Activated naive CD4-positive, alpha-beta T cell treated with anti-CD3 and anti-CD28 coated beads, Interleukin-2, amount 10 ng/mL, durations not matched to agents 7 days and 5 days (primary cell): ENCODE measurements at regions of chr5 and their contacts with region 1.

Region 1: DNA sequence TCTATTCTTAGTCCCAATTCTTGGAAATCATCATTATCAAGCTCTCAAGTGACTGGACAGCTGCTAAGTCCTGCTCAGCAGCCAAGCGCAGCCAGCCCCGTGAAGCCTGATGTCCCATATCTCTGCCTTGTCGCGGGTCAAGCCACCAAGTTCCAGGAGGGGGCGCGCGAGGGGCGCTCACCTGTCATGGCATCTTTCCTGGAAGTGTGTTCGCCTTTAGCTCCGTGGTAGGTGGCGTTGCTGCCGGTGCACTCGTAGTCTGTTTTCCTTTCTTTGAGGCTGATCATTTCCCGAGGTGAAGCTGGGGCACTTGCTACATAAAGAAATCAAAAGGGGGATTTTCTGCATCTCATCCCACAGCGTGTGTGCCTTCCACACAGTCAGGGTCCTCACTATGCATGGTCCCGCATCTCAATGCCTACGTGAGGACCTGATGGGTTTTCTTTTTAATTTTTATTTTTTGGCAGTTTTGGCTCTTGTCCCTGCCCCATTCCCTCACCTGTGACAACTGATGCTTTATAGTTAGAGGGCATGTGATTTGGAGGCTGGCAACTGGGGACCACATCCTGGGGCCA is 227.0 kb upstream of the DAP start:
- DNase-seq: peak; percentile 76
- H3K4me3 Mint-ChIP-seq: no peak overlapping the region
- H3K27ac Mint-ChIP-seq: no peak overlapping the region
- H3K4me1 Mint-ChIP-seq: peaks cover 9% of the 10 kb centered on the region
- H3K27me3 Mint-ChIP-seq: peaks cover 13% of the 10 kb centered on the region

Region 2: DNA sequence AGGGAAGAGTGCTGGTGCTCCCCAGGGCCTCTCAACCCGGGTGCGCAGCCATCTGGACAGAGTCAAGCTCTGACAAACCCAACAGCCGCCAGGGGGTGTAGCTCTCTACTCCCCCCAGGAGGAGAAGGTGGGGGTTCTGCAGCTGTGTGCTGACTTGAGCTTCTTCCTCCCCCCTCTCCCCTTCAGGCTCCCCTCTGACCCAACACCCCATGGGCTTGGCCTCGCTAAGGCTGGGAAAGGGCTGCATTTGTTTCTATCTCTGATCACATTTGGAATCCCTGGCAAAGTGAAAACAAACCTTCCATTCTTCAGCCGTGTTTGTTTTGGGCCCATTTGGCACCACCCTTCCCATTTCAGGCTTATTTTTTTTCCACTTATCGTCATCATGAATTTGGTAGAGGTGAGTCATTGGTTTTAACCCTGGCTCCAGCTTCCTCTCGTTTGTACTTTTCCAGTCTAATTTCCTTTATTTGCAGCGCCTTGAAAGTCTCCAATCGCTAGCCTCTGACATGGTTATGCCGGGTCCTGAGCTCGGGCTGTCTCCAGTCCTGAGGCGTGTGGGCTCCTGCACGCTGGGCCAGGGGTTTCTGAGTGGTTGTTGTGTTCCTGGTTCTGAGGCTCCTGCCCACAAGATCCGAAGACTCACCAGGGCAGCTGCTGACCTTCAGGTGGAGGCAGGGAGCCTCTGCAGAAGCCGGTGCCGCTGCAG is 263.1 kb before region 1 on chr5:
- CTCF ChIA-PET with region 1: no interaction called
- DNase-seq: no peak
- H3K4me3 Mint-ChIP-seq: no peak overlapping the region
- H3K27ac Mint-ChIP-seq: no peak overlapping the region
- H3K4me1 Mint-ChIP-seq: no peaks in the 10 kb centered on the region
- H3K27me3 Mint-ChIP-seq: no peaks in the 10 kb centered on the region

Region 3: GRCh38 chr5:10946050-10946449 is 42.0 kb before region 1 on chr5:
- CTCF ChIA-PET with region 1: no interaction called
- DNase-seq: no peak
- H3K4me3 Mint-ChIP-seq: no peak overlapping the region
- H3K27ac Mint-ChIP-seq: no peak overlapping the region
- H3K4me1 Mint-ChIP-seq: no peaks in the 10 kb centered on the region
- H3K27me3 Mint-ChIP-seq: no peaks in the 10 kb centered on the region

Region 4: GRCh38 chr5:10977011-10977410 is 11.0 kb before region 1 on chr5:
- CTCF ChIA-PET with region 1: interaction called, 10 read pairs
- DNase-seq: no peak
- H3K4me3 Mint-ChIP-seq: no peak overlapping the region
- H3K27ac Mint-ChIP-seq: no peak overlapping the region
- H3K4me1 Mint-ChIP-seq: no peaks in the 10 kb centered on the region
- H3K27me3 Mint-ChIP-seq: no peaks in the 10 kb centered on the region